BJ (cell line): ENCODE measurements at regions of chr20 and their contacts with region 1.

Region 1: DNA sequence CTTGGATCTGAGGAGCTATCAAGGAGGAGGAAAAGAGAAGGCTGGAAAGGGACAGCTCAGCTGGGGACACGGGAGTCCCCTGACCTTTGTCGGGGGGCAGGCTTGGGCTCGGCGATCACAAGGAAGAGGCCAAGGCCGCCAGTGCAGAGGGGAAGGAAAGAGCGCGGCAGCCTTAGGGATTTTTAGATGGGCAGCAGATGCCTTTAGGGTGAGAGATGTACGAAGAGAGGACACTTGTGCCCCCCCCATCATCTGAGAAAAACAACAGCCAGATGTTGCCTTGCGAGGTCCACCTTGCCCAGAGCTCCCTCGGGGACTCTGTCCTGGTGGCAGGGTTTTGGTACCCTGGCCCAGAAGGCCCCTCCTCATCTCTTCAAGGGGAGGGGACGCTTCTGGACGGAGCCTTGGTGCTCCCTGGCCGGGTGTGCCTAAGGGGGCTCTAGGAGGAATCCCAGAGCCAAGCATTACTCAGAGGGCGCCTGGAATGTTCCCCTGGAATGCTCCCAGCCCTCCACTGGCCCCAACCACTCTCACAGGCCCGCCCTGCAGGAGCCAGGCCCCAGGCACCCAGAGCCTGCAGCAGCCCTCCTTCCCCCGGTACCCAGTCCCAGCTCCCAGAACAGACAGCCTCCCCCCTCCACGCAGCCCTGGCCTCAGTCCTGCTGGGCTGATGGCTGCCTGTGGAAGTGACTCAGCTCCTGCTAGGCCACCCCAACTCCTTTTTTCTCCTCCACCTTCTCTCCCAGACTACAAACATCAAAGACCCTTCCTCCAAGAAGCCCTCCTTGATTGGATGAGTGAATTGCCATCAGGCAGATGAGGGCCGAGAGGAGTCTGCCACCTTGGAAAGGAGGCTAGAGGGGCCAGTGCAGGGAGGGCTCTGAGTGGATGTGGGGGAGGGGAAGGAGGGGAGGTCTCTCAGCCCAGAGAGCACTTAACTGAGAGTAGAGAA is 1.8 kb downstream of the ADAM33 start:
- DNase-seq: no peak
- H3K4me3 ChIP-seq: peak overlapping the region; percentile 85
- H3K27me3 ChIP-seq: no peaks in the 10 kb centered on the region
- CTCF ChIP-seq: no peak

Region 2: GRCh38 chr20:3667434-3668037 is 12.5 kb before region 1 on chr20:
- CTCF ChIA-PET with region 1: interaction called, 20 read pairs
- POLR2A ChIA-PET with region 1: no interaction called
- DNase-seq: no peak
- H3K4me3 ChIP-seq: no peak overlapping the region
- H3K27me3 ChIP-seq: peaks cover under 1% of the 10 kb centered on the region; the same call in 1 of the 2 replicates
- CTCF ChIP-seq: no peak

Region 3: DNA sequence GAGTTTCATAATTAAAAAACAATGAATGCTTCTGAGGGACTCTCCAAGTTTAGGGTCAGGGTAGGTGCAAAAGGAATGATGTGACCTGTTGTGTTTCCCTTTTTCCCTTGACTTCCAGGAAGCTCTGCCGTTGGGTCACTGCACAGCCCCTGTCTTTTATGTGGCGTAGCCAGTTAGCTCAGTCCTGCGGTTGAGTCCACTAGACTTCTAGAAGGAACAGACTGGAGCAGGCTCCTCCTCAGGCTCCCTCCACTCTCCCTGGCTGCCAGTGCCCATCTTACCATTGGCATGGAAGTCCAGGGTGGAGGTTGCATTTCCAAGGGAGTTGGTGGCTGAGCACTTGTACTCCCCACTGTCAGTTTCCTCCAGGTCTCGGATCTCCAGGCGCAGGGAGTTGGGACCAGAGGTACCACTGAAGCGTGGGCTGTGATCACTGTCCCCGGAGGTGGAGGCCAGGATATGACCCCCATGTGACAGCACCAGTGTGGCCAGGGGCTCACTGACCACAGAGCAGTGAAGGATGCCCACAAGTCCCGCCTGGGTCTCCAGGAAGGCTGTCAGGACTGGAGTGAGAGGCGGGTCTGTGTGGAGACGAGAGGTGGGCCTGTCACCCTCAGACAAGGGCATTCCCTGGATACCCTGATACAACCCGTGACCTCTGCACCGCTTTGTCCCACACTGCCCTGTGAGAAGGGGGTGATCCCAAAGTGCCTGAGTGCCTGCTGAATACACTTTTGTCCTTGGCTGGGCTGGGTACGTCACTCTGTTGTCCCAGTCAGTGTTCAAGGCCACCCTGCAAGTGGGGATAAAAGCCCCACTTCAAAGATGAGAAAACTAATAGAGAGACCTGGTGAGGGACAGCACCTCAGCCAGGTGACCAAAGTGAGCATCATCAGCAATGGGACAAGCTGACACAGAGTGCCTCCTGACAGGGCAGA is 21.3 kb after region 1 on chr20:
- CTCF ChIA-PET with region 1: interaction called, 75 read pairs
- POLR2A ChIA-PET with region 1: interaction called, 4 read pairs
- DNase-seq: no peak
- H3K4me3 ChIP-seq: no peak overlapping the region
- H3K27me3 ChIP-seq: peaks cover 2% of the 10 kb centered on the region; the same call in 1 of the 2 replicates
- CTCF ChIP-seq: no peak

Region 4: GRCh38 chr20:3767427-3768341 is 87.7 kb after region 1 on chr20 and contains the start of gene ADISSP:
- CTCF ChIA-PET with region 1: interaction called, 11 read pairs
- POLR2A ChIA-PET with region 1: no interaction called
- DNase-seq: peak; percentile 85
- H3K4me3 ChIP-seq: peak within 1 kb of the TSS; percentile 73
- H3K27me3 ChIP-seq: no peaks in the 10 kb centered on the region
- CTCF ChIP-seq: peak; percentile 30
- polyA plus RNA-seq, gene ADISSP: 21.3 and 34.3 TPM in 2 replicates

Region 5: GRCh38 chr20:3786665-3787323 is 106.8 kb after region 1 on chr20 and contains the start of gene CENPB:
- CTCF ChIA-PET with region 1: interaction called, 11 read pairs
- POLR2A ChIA-PET with region 1: no interaction called
- DNase-seq: no peak
- H3K4me3 ChIP-seq: peak within 1 kb of the TSS; percentile 71
- H3K27me3 ChIP-seq: no peaks in the 10 kb centered on the region
- CTCF ChIP-seq: peak; percentile 45
- polyA plus RNA-seq, gene CENPB: 31.0 and 47.5 TPM in 2 replicates

Region 6: DNA sequence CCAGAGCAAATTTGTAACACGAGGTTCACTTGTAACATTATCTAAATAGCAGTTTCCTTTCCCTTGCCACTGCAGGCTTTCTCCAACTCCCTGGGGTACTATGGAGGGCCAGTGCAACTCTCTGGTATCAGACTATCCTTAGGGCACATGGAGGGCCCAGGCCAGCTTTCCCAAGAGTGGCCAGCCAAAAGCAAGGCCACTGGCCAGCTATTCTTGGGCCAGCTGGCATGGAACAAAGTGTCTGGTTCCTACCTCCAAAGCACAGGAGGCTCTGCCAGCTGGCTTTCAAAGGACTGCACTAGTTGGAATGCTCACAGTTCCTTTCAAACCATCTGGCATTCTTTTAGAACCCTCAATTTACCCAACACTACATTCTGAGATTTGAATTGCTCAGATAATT is 326.6 kb after region 1 on chr20:
- CTCF ChIA-PET with region 1: no interaction called
- POLR2A ChIA-PET with region 1: no interaction called
- DNase-seq: no peak
- H3K4me3 ChIP-seq: no peak overlapping the region
- H3K27me3 ChIP-seq: no peaks in the 10 kb centered on the region
- CTCF ChIP-seq: no peak